ENCODE measurements at regions of chr4 and their contacts with region 1.

Region 1: GRCh38 chr4:110516106-110516922 is 40.4 kb downstream of the ENPEP start:
- DNase-seq: peak; percentile 77
- H3K4me3 ChIP-seq: peak overlapping the region; percentile 47 to 85 (median 60)
- H3K27ac ChIP-seq: peak overlapping the region; percentile 55
- H3K4me1 ChIP-seq: peaks cover 3% of the 10 kb centered on the region
- H3K27me3 ChIP-seq: no peaks in the 10 kb centered on the region
- CTCF ChIP-seq: peak; percentile 83 to 84

Region 2: GRCh38 chr4:109424093-109424841 is 1092.0 kb before region 1 on chr4:
- CTCF ChIA-PET with region 1: no interaction called
- dilution Hi-C with region 1: no loop called
- in situ Hi-C with region 1: loop called in 1 of 2 experiments (anchors 25 kb)
- intact Hi-C with region 1: loop called (anchors 5 kb)
- DNase-seq: no peak
- H3K4me3 ChIP-seq: no peak overlapping the region
- H3K27ac ChIP-seq: no peak overlapping the region
- H3K4me1 ChIP-seq: no peaks in the 10 kb centered on the region
- H3K27me3 ChIP-seq: no peaks in the 10 kb centered on the region
- CTCF ChIP-seq: no peak

Region 3: DNA sequence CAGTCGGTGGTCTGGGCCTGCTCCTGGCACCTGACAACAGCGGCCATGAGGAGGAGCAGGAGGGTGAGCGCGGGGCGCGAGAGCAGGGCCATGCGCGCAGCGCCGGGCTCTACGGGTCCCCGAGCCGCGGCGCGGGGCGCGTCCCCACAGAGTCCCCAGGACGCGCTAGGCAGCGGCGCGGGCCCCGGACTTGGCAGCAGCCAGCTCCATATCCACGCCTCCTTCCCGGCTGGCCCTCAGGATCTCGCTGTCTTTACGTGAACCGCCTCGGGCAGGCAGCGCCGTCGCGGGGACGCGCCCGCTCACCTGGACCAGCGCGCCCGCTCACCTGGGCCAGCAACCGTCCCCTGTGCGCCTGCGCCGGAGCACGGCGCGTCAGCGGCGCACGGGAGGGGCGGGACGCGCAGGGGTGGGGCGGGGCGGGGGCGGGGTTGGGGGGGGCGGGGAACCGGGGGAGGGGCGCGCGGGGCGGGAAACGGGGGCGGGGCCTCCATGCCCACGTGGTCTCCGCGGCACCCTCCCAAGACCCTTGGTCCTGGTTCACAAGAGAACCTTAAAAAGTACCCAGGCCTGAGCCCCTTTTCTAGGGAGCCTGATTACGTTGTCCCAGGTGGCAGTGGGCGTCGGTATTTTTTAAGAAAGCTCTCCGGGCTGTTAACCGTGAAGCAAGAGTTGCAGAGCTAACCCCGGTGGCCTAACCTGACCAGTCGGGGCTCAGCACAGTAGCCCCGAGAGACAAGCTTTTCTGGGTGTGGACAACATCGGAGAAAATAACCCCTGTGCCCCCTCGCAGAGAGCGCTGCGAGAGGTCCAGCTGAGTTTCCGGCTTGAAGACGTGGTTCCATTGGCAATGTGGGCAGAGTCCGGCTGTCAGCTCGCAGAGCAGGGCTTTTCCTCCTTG is 786.3 kb before region 1 on chr4 and contains the start of gene PLA2G12A:
- CTCF ChIA-PET with region 1: no interaction called
- dilution Hi-C with region 1: no loop called
- in situ Hi-C with region 1: no loop called
- intact Hi-C with region 1: loop called (anchors 10 kb)
- DNase-seq: peak; percentile 93
- H3K4me3 ChIP-seq: peak within 1 kb of the TSS; percentile 70 to 81 (median 78)
- H3K27ac ChIP-seq: peak within 1 kb of the TSS; percentile 56
- H3K4me1 ChIP-seq: peaks cover 8% of the 10 kb centered on the region
- H3K27me3 ChIP-seq: no peaks in the 10 kb centered on the region
- CTCF ChIP-seq: no peak
- total RNA-seq, gene PLA2G12A: 38.9 to 59.0 TPM

Region 4: DNA sequence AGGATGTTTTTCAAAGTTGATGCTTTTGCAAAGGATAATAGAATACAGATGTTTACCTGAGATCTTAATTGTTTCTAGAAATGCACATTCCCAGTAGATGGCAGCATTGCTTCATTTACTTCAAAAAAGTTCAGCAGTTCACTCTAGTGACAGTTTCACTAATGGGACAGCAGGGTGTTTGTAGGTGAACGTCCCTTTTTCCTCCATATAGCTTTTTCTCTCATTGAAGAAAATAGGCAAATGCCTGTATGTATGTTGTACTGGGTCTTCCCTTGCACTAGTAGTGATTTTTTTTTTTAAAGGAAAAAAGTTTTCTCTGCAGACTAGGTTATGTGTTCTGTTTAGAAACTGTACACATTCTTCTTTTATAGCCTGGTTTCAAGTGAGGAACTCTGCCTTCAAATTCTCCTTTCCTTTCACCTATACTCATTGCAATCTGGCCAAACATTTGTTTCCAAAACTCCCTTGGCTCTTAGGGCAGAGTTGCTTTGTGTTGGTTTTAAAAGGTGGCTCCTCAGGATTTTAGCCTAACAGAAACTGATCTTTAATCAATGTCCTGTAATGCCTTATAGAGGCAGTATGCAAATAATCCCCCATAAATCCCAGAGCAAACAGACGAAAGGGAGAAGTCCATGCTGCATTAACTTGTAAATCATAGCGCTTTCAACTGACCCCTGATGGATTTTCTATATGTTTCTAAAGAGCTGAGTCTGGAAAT is 517.3 kb before region 1 on chr4:
- CTCF ChIA-PET with region 1: no interaction called
- dilution Hi-C with region 1: no loop called
- in situ Hi-C with region 1: loop called in 1 of 2 experiments (anchors 5 kb)
- intact Hi-C with region 1: loop called (anchors 1 kb)
- DNase-seq: peak; percentile 44
- H3K4me3 ChIP-seq: no peak overlapping the region
- H3K27ac ChIP-seq: no peak overlapping the region
- H3K4me1 ChIP-seq: no peaks in the 10 kb centered on the region
- H3K27me3 ChIP-seq: no peaks in the 10 kb centered on the region
- CTCF ChIP-seq: peak; percentile 53 to 69

Region 5: GRCh38 chr4:110196206-110196870 is 320.0 kb before region 1 on chr4:
- CTCF ChIA-PET with region 1: no interaction called
- dilution Hi-C with region 1: no loop called
- in situ Hi-C with region 1: loop called in 1 of 2 experiments (anchors 25 kb)
- intact Hi-C with region 1: loop called (anchors 5 kb)
- DNase-seq: peak; percentile 40
- H3K4me3 ChIP-seq: peak overlapping the region; percentile 62 to 82 (median 78)
- H3K27ac ChIP-seq: peak overlapping the region; percentile 71
- H3K4me1 ChIP-seq: peaks cover 29% of the 10 kb centered on the region
- H3K27me3 ChIP-seq: no peaks in the 10 kb centered on the region
- CTCF ChIP-seq: no peak

Region 6: GRCh38 chr4:110250023-110250387 is 266.3 kb before region 1 on chr4:
- CTCF ChIA-PET with region 1: no interaction called
- dilution Hi-C with region 1: no loop called
- in situ Hi-C with region 1: no loop called
- intact Hi-C with region 1: no loop called
- DNase-seq: peak; percentile 38
- H3K4me3 ChIP-seq: no peak overlapping the region
- H3K27ac ChIP-seq: no peak overlapping the region
- H3K4me1 ChIP-seq: no peaks in the 10 kb centered on the region
- H3K27me3 ChIP-seq: no peaks in the 10 kb centered on the region
- CTCF ChIP-seq: no peak

Region 7: GRCh38 chr4:110310795-110311194 is 205.5 kb before region 1 on chr4:
- CTCF ChIA-PET with region 1: interaction called, 6 read pairs
- dilution Hi-C with region 1: no loop called
- in situ Hi-C with region 1: loop called (anchors 10 to 25 kb)
- intact Hi-C with region 1: loop called (anchors 1 kb)
- DNase-seq: no peak
- H3K4me3 ChIP-seq: no peak overlapping the region
- H3K27ac ChIP-seq: no peak overlapping the region
- H3K4me1 ChIP-seq: no peaks in the 10 kb centered on the region
- H3K27me3 ChIP-seq: peaks cover 3% of the 10 kb centered on the region
- CTCF ChIP-seq: no peak

Region 8: GRCh38 chr4:110484740-110485139 is 31.6 kb before region 1 on chr4:
- CTCF ChIA-PET with region 1: no interaction called
- dilution Hi-C with region 1: no loop called
- in situ Hi-C with region 1: no loop called
- intact Hi-C with region 1: no loop called
- DNase-seq: peak; percentile 14
- H3K4me3 ChIP-seq: no peak overlapping the region
- H3K27ac ChIP-seq: no peak overlapping the region
- H3K4me1 ChIP-seq: no peaks in the 10 kb centered on the region
- H3K27me3 ChIP-seq: no peaks in the 10 kb centered on the region
- CTCF ChIP-seq: no peak

Region 9: GRCh38 chr4:110586131-110586850 is 70.0 kb after region 1 on chr4:
- CTCF ChIA-PET with region 1: no interaction called
- dilution Hi-C with region 1: no loop called
- in situ Hi-C with region 1: no loop called
- intact Hi-C with region 1: loop called (anchors 1 kb)
- DNase-seq: peak; percentile 46
- H3K4me3 ChIP-seq: peak overlapping the region in 1 of 3 experiments; percentile 19
- H3K27ac ChIP-seq: no peak overlapping the region
- H3K4me1 ChIP-seq: no peaks in the 10 kb centered on the region
- H3K27me3 ChIP-seq: no peaks in the 10 kb centered on the region
- CTCF ChIP-seq: peak; percentile 53 to 68

Measured in mammary epithelial cell (primary cell).